A673 (cell line): ENCODE measurements at regions of chr16 and their contacts with region 1.

Region 1: GRCh38 chr16:88194397-88195268 is 188.1 kb upstream of the ZNF469 start:
- DNase-seq: no peak
- H3K4me3 ChIP-seq: no peak overlapping the region
- H3K27ac ChIP-seq: no peak overlapping the region
- H3K4me1 ChIP-seq: no peaks in the 10 kb centered on the region
- H3K27me3 ChIP-seq: no peaks in the 10 kb centered on the region
- CTCF ChIP-seq: no peak

Region 2: DNA sequence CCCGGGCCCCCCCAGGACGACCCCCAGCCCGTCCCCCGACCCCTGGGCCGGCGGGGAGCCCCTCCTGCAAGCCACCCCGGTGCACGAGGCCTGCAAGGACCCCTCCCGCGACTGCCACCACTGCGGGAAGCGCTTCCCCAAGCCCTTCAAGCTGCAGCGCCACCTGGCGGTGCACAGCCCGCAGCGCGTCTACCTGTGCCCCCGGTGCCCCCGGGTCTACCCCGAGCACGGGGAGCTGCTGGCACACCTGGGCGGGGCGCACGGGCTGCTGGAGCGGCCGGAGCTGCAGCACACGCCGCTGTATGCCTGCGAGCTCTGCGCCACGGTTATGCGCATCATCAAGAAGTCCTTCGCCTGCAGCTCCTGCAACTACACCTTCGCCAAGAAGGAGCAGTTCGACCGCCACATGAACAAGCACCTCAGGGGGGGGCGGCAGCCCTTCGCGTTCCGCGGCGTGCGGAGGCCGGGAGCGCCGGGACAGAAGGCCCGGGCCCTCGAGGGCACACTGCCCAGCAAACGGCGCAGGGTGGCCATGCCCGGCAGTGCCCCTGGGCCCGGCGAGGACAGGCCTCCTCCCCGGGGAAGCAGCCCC is 242.8 kb after region 1 on chr16:
- CTCF ChIA-PET with region 1: no interaction called
- POLR2A ChIA-PET with region 1: no interaction called
- intact Hi-C with region 1: loop called (anchors 5 kb)
- DNase-seq: peak; percentile 58
- H3K4me3 ChIP-seq: no peak overlapping the region
- H3K27ac ChIP-seq: no peak overlapping the region
- H3K4me1 ChIP-seq: no peaks in the 10 kb centered on the region
- H3K27me3 ChIP-seq: peaks cover 5% of the 10 kb centered on the region
- CTCF ChIP-seq: peak; percentile 94